Naive thymus-derived CD8-positive, alpha-beta T cell (primary cell): ENCODE measurements at regions of chr22 and their contacts with region 1.

Region 1: GRCh38 chr22:28800308-28801077 is at the start of gene XBP1:
- DNase-seq: peak; percentile 78 to 92 (median 86)
- ATAC-seq: peak; percentile 94 to 97
- H3K4me3 Mint-ChIP-seq: peak within 1 kb of the TSS; percentile 88 to 99 (median 94)
- H3K27ac Mint-ChIP-seq: peak within 1 kb of the TSS; percentile 98 to 100 (median 99)
- H3K4me1 Mint-ChIP-seq: peaks cover 22 to 69% (median 54%) of the 10 kb centered on the region in 4 donors
- H3K27me3 Mint-ChIP-seq: no peaks in the 10 kb centered on the region
- polyA plus RNA-seq, gene XBP1: 150 to 238 (median 176) TPM

Region 2: GRCh38 chr22:28772633-28773460 is 27.6 kb before region 1 on chr22 and contains the start of gene CCDC117:
- POLR2A ChIA-PET with region 1: interaction called, 24 read pairs
- DNase-seq: peak; percentile 84 to 96 (median 90)
- ATAC-seq: peak; percentile 92 to 94
- H3K4me3 Mint-ChIP-seq: peak within 1 kb of the TSS; percentile 91 to 100 (median 96)
- H3K27ac Mint-ChIP-seq: peak within 1 kb of the TSS; percentile 88 to 98 (median 94)
- H3K4me1 Mint-ChIP-seq: peaks cover 15 to 40% (median 33%) of the 10 kb centered on the region in 4 donors
- H3K27me3 Mint-ChIP-seq: no peaks in the 10 kb centered on the region
- polyA plus RNA-seq, gene CCDC117: 7.2 to 11.1 (median 7.7) TPM

Region 3: GRCh38 chr22:28810821-28811491 is 10.5 kb after region 1 on chr22:
- POLR2A ChIA-PET with region 1: interaction called, 117 read pairs
- DNase-seq: peak in 7 of 10 donors; percentile 38 to 69 (median 46)
- ATAC-seq: peak; percentile 63 to 66
- H3K4me3 Mint-ChIP-seq: peak overlapping the region; percentile 74 to 89 (median 83)
- H3K27ac Mint-ChIP-seq: peak overlapping the region; percentile 78 to 96 (median 92)
- H3K4me1 Mint-ChIP-seq: peaks cover 26 to 87% (median 73%) of the 10 kb centered on the region in 4 donors
- H3K27me3 Mint-ChIP-seq: no peaks in the 10 kb centered on the region

Region 4: GRCh38 chr22:28817919-28818909 is 17.7 kb after region 1 on chr22:
- POLR2A ChIA-PET with region 1: interaction called, 117 read pairs
- DNase-seq: peak in 1 of 10 donors; percentile 12
- ATAC-seq: no peak
- H3K4me3 Mint-ChIP-seq: peak overlapping the region in 7 of 10 donors; percentile 21 to 82 (median 52)
- H3K27ac Mint-ChIP-seq: peak overlapping the region in 8 of 10 donors; percentile 43 to 92 (median 76)
- H3K4me1 Mint-ChIP-seq: peaks cover 36 to 83% (median 77%) of the 10 kb centered on the region in 4 donors
- H3K27me3 Mint-ChIP-seq: no peaks in the 10 kb centered on the region

Region 5: GRCh38 chr22:28829358-28830181 is 29.1 kb after region 1 on chr22:
- POLR2A ChIA-PET with region 1: interaction called, 28 read pairs
- DNase-seq: peak; percentile 52 to 84 (median 73)
- ATAC-seq: peak; percentile 77 to 80
- H3K4me3 Mint-ChIP-seq: peak overlapping the region in 7 of 10 donors; percentile 33 to 83 (median 59)
- H3K27ac Mint-ChIP-seq: peak overlapping the region in 6 of 10 donors; percentile 24 to 85 (median 64)
- H3K4me1 Mint-ChIP-seq: peaks cover 10 to 30% (median 24%) of the 10 kb centered on the region in 4 donors
- H3K27me3 Mint-ChIP-seq: no peaks in the 10 kb centered on the region

Region 6: DNA sequence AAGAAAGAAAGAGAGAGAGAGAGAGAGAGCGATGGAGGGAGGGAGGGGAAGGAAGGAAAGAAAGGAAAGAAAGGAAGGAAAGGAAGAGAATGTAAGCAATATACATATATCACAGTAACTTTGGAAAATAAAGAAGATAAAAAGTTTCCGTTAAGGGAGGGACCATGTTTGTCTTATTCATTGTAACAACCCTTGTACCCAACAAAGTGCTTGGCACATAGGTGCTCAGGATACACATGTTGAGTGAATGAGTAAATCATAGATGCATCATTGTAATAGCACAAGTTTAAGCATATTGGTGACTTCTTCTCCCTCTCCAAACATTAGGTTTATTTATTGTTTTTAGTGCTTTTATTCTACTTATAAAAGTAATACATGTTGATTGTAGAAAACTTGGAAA is 43.1 kb after region 1 on chr22:
- POLR2A ChIA-PET with region 1: no interaction called
- DNase-seq: no peak
- ATAC-seq: no peak
- H3K4me3 Mint-ChIP-seq: no peak overlapping the region
- H3K27ac Mint-ChIP-seq: no peak overlapping the region
- H3K4me1 Mint-ChIP-seq: peaks cover 0 to 3% (median 0%) of the 10 kb centered on the region in 4 donors
- H3K27me3 Mint-ChIP-seq: no peaks in the 10 kb centered on the region